ENCODE measurements at regions of chr18 and their contacts with region 1.

Region 1: GRCh38 chr18:21704603-21705364 is at the start of gene ABHD3:
- DNase-seq: peak; percentile 96 to 98
- ATAC-seq: peak; percentile 99
- H3K4me3 ChIP-seq: peak within 1 kb of the TSS; percentile 67 to 74
- H3K27ac ChIP-seq: peak within 1 kb of the TSS; percentile 53 to 79
- H3K4me1 ChIP-seq: no peaks in the 10 kb centered on the region
- H3K27me3 ChIP-seq: no peaks in the 10 kb centered on the region
- total RNA-seq, gene ABHD3: 17.5 to 21.7 TPM

Region 2: GRCh38 chr18:21612125-21612991 is 92.4 kb before region 1 on chr18 and contains the start of gene SNRPD1:
- intact Hi-C with region 1: loop called in 1 of 2 experiments (anchors 10 kb)
- DNase-seq: peak; percentile 92 to 96
- ATAC-seq: peak; percentile 100
- H3K4me3 ChIP-seq: peak within 1 kb of the TSS; percentile 85 to 97
- H3K27ac ChIP-seq: peak within 1 kb of the TSS; percentile 30 to 46
- H3K4me1 ChIP-seq: no peaks in the 10 kb centered on the region
- H3K27me3 ChIP-seq: no peaks in the 10 kb centered on the region
- total RNA-seq, gene SNRPD1: 21.0 to 35.4 TPM

Region 3: GRCh38 chr18:21740724-21741510 is 36.1 kb after region 1 on chr18 and contains the start of gene MIB1:
- intact Hi-C with region 1: loop called (anchors 2 to 5 kb)
- DNase-seq: peak in 1 of 2 donors; percentile 88
- ATAC-seq: peak; percentile 94
- H3K4me3 ChIP-seq: peak within 1 kb of the TSS; percentile 85 to 95
- H3K27ac ChIP-seq: peak within 1 kb of the TSS; percentile 53 to 60
- H3K4me1 ChIP-seq: no peaks in the 10 kb centered on the region
- H3K27me3 ChIP-seq: no peaks in the 10 kb centered on the region
- total RNA-seq, gene MIB1: 57.1 to 63.5 TPM

Region 4: GRCh38 chr18:21897811-21898210 is 193.0 kb after region 1 on chr18:
- intact Hi-C with region 1: no loop called
- DNase-seq: peak in 1 of 2 donors; percentile 49
- ATAC-seq: peak; percentile 68
- H3K4me3 ChIP-seq: no peak overlapping the region
- H3K27ac ChIP-seq: no peak overlapping the region
- H3K4me1 ChIP-seq: no peaks in the 10 kb centered on the region
- H3K27me3 ChIP-seq: no peaks in the 10 kb centered on the region

Measured in aorta (tissue), 5 donors.